Common myeloid progenitor, CD34-positive (primary cell): ENCODE measurements at regions of chr9 and their contacts with region 1.

Region 1: DNA sequence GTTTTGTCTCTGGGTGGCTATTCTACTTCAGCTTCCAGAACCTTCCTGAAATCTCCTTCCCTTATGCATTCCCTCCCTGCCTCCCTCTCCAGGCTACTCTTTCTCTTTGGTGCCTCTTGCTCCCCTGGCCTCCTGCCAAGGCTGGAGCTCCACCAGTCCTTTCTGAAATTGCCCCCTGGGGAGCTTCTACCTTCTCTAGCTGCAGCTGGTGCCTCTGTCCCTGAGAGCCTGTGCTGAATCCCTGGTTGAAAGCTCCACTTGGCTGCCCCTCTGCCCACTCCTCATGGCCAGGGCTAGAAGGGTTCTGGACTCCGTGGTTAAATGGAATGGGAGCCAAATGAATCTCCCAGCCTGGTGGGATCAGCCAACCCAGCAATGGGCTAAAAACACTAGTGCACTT is 80.1 kb downstream of the COL15A1 start:
- DNase-seq: peak in 1 of 3 donors; percentile 19
- H3K4me3 ChIP-seq: no peak overlapping the region
- H3K27ac ChIP-seq: no peak overlapping the region
- H3K4me1 ChIP-seq: peaks cover 0 to 5% (median 0%) of the 10 kb centered on the region in 4 experiments
- H3K27me3 ChIP-seq: no peaks in the 10 kb centered on the region

Region 2: DNA sequence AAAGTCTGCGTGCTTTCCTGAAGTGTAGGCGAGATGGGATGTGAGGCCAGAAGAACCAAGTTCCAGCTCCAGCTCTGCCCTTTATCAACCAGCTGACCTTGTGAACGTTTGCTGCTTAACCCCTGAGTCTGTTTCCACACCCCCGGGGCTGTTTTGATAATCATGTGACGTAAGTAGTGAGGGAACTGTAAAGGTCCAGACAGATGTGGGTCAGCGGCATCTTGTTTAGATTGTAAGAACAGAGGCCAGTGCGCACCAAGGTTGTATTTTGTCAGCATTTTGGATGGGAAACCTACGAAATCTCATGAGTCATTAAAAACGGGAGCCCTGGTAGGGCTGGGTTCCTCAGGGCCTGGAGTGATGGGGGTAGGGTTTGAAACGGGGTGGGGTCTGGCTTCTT is 94.0 kb before region 1 on chr9:
- CTCF ChIA-PET with region 1: no interaction called
- POLR2A ChIA-PET with region 1: no interaction called
- DNase-seq: no peak
- H3K4me3 ChIP-seq: no peak overlapping the region
- H3K27ac ChIP-seq: no peak overlapping the region
- H3K4me1 ChIP-seq: no peaks in the 10 kb centered on the region
- H3K27me3 ChIP-seq: peaks cover 0 to 5% (median 0%) of the 10 kb centered on the region in 5 experiments

Region 3: GRCh38 chr9:98989036-98990000 is 34.5 kb before region 1 on chr9:
- CTCF ChIA-PET with region 1: no interaction called
- POLR2A ChIA-PET with region 1: no interaction called
- DNase-seq: no peak
- H3K4me3 ChIP-seq: no peak overlapping the region
- H3K27ac ChIP-seq: no peak overlapping the region
- H3K4me1 ChIP-seq: peaks cover 0 to 8% (median 0%) of the 10 kb centered on the region in 4 experiments
- H3K27me3 ChIP-seq: no peaks in the 10 kb centered on the region

Region 4: DNA sequence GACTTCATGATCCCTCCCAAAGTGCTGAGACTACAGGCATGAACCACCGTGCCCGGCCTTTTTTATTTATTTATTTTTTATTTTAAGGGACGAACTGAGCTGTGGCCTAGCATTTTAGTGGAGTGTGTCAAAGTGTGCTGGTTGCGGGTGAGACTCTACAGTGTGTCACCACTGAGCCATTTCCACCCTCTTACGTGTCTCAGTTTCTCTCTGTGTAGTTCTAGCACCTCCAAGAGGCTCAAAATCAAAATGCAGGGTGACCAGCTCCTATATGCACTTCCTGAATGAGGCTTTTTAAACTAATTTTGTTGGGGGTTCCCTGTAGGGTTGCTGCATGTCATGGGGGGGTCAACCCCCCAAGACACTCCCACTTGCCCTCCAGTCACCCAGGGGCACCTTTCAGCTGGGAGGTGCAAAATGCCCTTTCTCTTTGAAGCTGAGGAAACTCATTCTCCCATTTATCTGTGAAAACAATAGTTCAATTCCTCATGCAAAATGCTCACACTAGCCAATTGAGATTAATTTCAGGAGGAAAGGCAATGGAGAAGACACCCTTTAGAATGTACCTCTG is 10.8 kb before region 1 on chr9:
- CTCF ChIA-PET with region 1: interaction called, 11 read pairs
- POLR2A ChIA-PET with region 1: no interaction called
- DNase-seq: no peak
- H3K4me3 ChIP-seq: no peak overlapping the region
- H3K27ac ChIP-seq: no peak overlapping the region
- H3K4me1 ChIP-seq: peaks cover 0 to 6% (median 3%) of the 10 kb centered on the region in 4 experiments
- H3K27me3 ChIP-seq: no peaks in the 10 kb centered on the region